Caco-2 (cell line): ENCODE measurements at regions of chr20 and their contacts with region 1.

Region 1: DNA sequence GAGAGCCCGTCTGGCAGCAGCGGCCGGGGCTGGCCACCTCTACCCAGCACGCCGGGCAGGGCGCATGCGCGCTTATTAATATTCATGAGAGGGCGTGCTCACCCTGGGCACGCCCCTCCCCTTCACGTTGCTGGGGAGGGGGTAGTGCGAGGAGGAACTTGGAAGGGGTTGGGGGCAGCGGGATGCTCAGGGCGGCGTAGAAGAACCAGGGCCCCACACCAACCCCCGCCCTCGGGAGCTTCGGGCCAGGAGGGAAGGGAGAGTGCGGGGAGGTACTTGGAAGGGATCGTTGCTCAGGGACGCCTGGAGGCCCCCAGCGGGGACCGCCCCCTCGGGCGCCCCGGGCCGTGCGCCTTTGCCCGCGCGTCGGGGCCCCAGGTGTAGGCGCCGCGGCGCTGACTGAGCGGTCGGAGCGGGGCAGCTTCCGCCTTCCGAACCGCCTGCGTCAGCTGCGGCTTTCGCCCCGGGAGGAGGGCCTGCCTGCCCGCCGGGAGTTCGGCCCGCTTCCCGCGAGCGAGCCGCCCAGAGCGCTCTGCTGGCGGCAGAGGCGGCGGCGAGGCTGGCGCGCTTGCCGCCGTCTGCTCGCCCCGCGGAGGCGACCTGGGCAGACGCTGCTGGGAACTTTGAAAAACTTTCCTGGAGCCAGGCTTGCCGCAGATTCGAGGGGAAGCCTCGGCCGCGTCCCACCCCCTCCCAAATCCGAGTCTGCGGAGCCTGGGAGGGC is at the start of gene JAG1:
- DNase-seq: peak; percentile 98 to 99
- H3K4me3 ChIP-seq: peak within 1 kb of the TSS; percentile 97
- H3K4me3 Mint-ChIP-seq: peak within 1 kb of the TSS; percentile 100
- H3K27ac Mint-ChIP-seq: peak within 1 kb of the TSS; percentile 98
- H3K4me1 ChIP-seq: peaks cover under 1% of the 10 kb centered on the region; the same call in 1 of the 2 replicates
- H3K4me1 Mint-ChIP-seq: peaks cover 14% of the 10 kb centered on the region
- H3K27me3 ChIP-seq: no peaks in the 10 kb centered on the region
- H3K27me3 Mint-ChIP-seq: peaks cover 2% of the 10 kb centered on the region
- CTCF ChIP-seq: no peak
- total RNA-seq, gene JAG1: 69.1 and 69.8 TPM in 2 replicates

Region 2: GRCh38 chr20:10660661-10661060 is 13.5 kb before region 1 on chr20:
- CTCF ChIA-PET with region 1: interaction called, 11 read pairs
- POLR2A ChIA-PET with region 1: interaction called, 14 read pairs
- intact Hi-C with region 1: loop called (anchors 1 kb)
- DNase-seq: no peak
- H3K4me3 ChIP-seq: no peak overlapping the region
- H3K4me3 Mint-ChIP-seq: peak overlapping the region; percentile 55
- H3K27ac Mint-ChIP-seq: peak overlapping the region; percentile 90
- H3K4me1 ChIP-seq: peaks cover 68% of the 10 kb centered on the region
- H3K4me1 Mint-ChIP-seq: peaks cover 80% of the 10 kb centered on the region
- H3K27me3 ChIP-seq: no peaks in the 10 kb centered on the region
- H3K27me3 Mint-ChIP-seq: no peaks in the 10 kb centered on the region
- CTCF ChIP-seq: no peak

Region 3: GRCh38 chr20:10857352-10858070 is 183.4 kb after region 1 on chr20:
- CTCF ChIA-PET with region 1: no interaction called
- POLR2A ChIA-PET with region 1: no interaction called
- intact Hi-C with region 1: loop called (anchors 1 kb)
- DNase-seq: peak; percentile 33 to 56
- H3K4me3 ChIP-seq: no peak overlapping the region
- H3K4me3 Mint-ChIP-seq: no peak overlapping the region
- H3K27ac Mint-ChIP-seq: peak overlapping the region; percentile 71
- H3K4me1 ChIP-seq: peaks cover 59% of the 10 kb centered on the region
- H3K4me1 Mint-ChIP-seq: peaks cover 25% of the 10 kb centered on the region
- H3K27me3 ChIP-seq: no peaks in the 10 kb centered on the region
- H3K27me3 Mint-ChIP-seq: no peaks in the 10 kb centered on the region
- CTCF ChIP-seq: no peak

Region 4: DNA sequence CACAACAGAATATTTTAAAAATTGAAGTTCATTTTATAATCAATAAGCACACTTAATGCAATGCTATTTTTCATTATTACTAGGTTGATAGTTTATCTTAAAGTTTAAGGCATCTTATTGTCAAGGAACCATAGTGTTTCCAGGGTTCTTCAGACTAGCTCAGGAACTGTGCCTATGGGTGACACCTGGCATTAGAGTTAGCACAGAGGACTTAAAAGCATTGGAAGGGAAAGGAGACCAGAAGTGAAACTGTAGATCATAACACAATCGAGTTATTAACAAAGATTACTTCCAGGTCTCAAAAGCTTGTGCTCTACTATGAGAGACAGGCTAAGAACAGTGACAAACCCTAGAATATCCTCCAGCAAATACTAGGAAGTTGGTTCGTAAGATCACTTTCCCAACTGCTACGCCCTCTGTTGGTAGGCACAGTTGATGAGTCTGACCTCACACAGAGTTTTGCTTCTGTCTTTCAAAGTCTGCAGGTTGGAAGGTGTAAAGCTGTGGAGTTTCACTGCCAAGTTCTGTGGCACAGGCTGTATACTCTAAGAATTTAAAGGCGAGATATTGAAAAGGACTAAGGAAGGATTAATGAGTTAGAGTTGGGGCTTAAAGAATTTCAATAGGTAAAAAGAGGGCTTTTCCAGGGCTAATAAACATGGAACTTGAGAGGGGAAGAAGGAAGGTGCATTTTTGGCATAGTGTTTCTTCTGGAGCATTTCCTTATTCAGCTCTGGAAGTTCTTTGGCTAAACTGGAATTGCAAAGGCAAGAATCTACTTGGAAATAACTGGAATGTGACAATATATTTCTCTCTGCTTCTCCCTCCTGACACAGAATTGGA is 531.0 kb after region 1 on chr20:
- CTCF ChIA-PET with region 1: interaction called, 7 read pairs
- POLR2A ChIA-PET with region 1: no interaction called
- intact Hi-C with region 1: loop called (anchors 1 kb)
- DNase-seq: peak; percentile 75 to 76
- H3K4me3 ChIP-seq: no peak overlapping the region
- H3K4me3 Mint-ChIP-seq: no peak overlapping the region
- H3K27ac Mint-ChIP-seq: peak overlapping the region; percentile 10
- H3K4me1 ChIP-seq: peaks cover 38% of the 10 kb centered on the region
- H3K4me1 Mint-ChIP-seq: peaks cover 20% of the 10 kb centered on the region
- H3K27me3 ChIP-seq: no peaks in the 10 kb centered on the region
- H3K27me3 Mint-ChIP-seq: no peaks in the 10 kb centered on the region
- CTCF ChIP-seq: peak; percentile 75 to 94

Region 5: DNA sequence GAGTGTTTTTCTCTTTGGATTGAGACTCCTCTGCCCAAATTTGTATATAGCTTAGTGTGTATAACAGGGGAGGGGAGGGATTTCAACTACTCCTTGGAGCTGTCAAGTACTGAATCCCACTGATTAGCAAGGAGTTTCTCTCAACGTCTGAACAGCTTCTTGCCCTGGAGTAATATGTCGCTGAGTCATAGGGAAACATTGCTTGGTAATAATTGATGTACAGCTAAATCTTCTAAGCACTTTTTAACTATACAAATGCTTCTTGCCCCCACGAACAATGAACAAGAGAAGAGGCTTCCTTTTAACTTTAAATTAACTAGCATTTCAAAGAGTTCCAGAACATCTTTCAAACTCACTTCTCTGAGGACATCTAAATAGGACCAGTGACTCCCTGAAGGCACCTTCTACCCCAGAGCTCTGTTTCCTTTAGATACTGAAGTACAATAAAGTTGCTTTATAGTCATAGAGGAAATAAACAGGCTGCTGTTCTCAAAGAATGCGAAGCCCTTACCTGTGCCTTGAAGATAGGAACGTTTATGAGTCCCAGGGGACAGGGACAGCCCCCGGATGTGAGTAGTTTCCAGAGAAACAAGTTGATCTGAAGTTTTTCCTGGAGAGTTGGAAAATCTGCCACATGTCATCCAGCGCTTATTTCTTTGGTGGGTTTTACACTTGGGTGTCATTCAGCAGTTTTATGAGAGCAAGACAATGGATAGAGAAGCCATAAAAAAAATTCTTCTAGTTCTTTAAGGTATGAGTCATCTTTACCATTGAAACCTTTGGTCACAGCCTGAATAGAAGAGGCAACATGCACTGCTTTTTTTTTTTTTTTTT is 781.0 kb after region 1 on chr20:
- CTCF ChIA-PET with region 1: no interaction called
- POLR2A ChIA-PET with region 1: no interaction called
- intact Hi-C with region 1: loop called (anchors 10 kb)
- DNase-seq: peak; percentile 82 to 92
- H3K4me3 ChIP-seq: peak overlapping the region; percentile 23
- H3K4me3 Mint-ChIP-seq: peak overlapping the region; percentile 73
- H3K27ac Mint-ChIP-seq: peak overlapping the region; percentile 92
- H3K4me1 ChIP-seq: peaks cover 69% of the 10 kb centered on the region
- H3K4me1 Mint-ChIP-seq: peaks cover 63% of the 10 kb centered on the region
- H3K27me3 ChIP-seq: no peaks in the 10 kb centered on the region
- H3K27me3 Mint-ChIP-seq: no peaks in the 10 kb centered on the region
- CTCF ChIP-seq: no peak